GM18951 (cell line): ENCODE measurements at regions of chr5 and their contacts with region 1.

Region 1: DNA sequence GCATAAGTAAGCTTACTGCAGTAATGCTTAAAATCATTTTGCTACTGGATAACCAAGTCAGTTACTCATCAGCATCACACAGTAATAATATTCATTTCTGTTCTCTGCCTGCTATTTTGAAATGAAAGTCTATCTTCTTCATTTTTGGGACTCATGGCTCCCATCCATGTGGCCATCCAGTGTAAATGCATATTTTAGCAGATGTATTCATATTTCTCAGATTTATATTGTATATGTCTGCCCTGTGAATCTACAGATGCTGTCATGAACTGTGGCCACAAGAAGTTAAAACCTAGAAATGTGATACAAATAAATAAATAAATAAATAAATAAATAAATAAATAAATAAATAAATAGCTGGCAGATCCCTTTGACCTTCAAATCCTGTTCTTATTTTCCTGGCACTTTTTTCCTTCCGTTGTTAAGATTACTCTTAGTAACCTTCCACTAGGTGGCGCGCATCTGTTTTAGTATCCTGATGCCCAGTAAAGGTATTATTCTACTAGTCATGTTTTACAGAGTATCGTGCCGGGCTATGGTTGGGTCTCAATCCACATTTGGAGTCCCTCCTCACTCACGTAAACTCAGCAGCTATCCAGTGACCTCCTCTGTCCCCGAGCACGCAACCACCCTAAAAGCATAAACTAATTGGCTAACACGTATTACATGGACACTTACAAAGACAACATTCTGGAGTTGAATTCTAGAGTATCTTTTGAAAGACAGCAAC is 79.2 kb upstream of the IL7R start:
- POLR2A ChIP-seq: no peak

Region 2: GRCh38 chr5:35502206-35502605 is 275.3 kb before region 1 on chr5:
- in situ Hi-C with region 1: no loop called
- POLR2A ChIP-seq: no peak

Region 3: DNA sequence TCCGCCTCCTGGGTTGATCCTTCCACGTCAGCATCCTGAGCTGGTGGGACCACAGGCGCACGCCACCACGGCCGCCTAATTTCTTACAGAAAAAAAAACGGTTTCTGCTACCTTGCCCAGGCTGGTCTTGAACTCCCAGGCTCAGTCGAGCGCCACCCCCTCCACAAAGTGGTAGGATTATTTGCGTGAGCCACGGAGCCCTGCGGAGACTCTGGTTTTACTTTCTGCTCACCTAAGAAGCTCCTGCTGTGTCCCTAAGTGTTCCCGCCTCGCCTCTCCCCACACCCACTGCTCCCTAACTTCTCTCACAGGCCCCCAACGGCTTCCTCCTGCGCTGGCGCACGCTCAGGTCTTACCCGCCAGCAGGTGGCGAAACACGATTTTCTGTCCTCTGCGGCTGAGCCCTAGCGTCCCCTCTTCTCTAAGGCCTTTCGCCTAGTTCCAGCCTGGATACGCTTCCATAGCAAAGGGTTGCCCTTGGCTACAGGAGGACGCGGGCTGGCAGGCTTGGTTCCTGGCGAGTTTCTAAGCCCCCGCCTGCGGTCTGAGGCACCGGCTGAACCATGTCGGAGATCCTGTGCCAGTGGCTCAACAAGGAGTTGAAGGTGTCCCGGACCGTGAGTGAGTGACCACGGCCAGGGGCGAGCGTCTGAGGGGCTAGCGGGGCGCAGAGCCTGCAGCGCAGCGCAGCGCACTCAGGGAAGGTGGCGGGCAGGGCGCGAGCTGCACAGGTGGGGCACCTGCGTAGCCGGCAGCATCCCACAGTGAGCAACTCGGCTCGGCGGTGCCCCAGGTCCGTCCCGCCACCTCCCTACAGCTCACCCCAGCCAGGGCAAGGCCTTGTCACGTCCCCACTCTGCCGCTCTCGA is 159.9 kb before region 1 on chr5 and contains the start of gene SPEF2:
- in situ Hi-C with region 1: no loop called
- POLR2A ChIP-seq: no peak

Region 4: DNA sequence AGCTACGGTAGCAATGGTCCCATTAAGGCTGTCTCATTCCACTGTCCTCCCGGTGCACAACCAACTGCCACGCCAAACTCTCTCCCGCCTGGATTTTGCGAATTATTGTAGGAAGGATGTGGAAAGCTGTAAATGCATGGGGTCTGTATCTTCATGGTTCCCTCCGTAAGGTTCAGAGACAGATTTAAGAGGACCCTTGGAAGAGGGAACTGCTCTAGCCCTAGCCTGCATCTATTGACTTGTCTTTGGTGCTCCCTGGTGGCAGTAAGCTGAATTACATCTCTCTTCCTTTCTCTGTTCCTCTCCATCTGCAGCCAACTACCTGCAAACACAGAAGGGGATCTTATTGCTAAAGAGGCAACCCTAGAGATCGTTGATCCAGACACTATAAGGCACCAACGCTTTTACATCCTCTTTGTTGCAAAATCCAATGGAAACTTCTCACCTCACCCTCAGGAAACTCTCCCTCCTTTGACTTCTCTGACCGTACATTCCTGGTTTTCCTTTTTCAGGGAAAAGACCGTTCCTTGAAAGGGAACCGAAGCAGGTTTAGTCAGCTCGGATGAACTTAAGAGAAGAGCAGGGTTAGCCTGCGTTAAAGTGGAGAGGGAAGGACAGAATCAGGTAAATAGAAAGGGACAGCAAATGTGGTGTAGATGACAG is 149.0 kb after region 1 on chr5:
- in situ Hi-C with region 1: loop called (anchors 5 kb)
- POLR2A ChIP-seq: no peak

Region 5: DNA sequence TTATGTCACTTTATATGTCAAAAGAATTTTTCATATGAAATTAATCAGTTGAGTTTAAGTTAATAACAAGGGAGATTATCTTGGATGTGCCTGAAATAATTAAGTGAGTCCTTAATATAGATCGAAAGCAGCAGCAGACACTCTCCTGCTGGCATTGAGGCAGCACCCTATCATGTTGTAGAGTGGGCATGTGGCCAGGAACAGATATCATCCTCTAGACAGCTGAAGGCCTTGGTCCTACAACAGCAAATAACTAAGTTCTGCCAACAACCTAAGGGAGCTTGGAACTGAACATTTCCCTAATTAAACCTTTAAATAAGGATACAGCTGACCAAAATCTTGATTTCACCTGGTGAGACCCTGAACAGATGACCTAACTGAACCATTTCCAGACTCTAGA is 239.5 kb after region 1 on chr5:
- in situ Hi-C with region 1: no loop called
- POLR2A ChIP-seq: no peak